ENCODE measurements at regions of chr19 and their contacts with region 1.

Region 1: GRCh38 chr19:18185538-18185937 is 7.5 kb upstream of the MPV17L2 start:
- DNase-seq: no peak
- ATAC-seq: no peak
- H3K4me3 ChIP-seq: no peak overlapping the region
- H3K27ac ChIP-seq: no peak overlapping the region
- H3K4me1 ChIP-seq: no peaks in the 10 kb centered on the region
- H3K27me3 ChIP-seq: peaks cover 9% of the 10 kb centered on the region
- CTCF ChIP-seq: no peak
- POLR2A ChIP-seq: no peak
- RAD21 ChIP-seq: no peak

Region 2: DNA sequence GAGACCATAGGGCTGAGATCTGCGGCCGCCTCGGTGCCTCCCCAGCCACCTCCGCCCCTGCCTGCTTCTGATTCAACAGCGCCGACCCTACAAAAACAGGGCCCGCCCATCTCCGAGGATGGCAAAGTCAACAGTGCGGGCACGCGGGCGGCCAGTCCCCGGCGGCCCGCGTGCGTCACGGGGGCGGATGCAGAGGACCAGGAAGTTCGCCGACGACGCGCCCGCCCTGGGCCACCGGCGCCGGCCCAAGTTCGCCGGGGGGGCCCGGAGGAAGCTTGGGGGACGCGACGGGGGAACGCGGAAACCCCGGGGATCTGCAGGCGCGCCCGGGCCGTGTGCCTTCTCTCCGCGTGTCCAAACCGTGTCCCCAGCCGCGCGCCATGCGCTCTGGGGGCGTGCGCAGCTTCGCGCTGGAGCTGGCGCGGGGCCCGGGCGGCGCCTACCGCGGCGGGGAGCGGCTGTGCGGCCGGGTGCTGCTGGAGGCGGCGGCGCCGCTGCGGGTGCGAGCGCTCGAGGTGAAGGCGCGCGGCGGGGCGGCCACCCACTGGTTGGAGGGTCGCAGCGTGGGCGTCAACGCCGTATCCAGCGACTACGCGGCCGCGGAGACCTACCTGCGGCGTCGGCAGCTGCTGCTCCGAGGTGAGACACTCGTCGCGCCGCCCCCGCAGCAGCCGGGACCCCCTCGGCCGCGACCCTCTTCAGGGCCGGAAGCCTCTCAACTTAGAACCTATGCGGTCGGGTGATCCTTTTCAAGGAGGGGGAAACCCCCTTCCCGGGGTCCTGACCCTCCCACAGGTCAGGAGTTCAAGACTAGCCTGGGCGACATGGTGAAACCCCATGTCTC is 184.4 kb before region 1 on chr19:
- CTCF ChIA-PET with region 1: no interaction called
- POLR2A ChIA-PET with region 1: no interaction called
- dilution Hi-C with region 1: no loop called
- in situ Hi-C with region 1: no loop called
- intact Hi-C with region 1: no loop called
- DNase-seq: peak; percentile 73
- ATAC-seq: peak; percentile 84
- H3K4me3 ChIP-seq: peak overlapping the region; percentile 63
- H3K27ac ChIP-seq: peak overlapping the region; percentile 24; the same call in 1 of the 2 replicates
- H3K4me1 ChIP-seq: no peaks in the 10 kb centered on the region
- H3K27me3 ChIP-seq: no peaks in the 10 kb centered on the region
- CTCF ChIP-seq: no peak
- POLR2A ChIP-seq: peak; percentile 64
- RAD21 ChIP-seq: no peak

Region 3: GRCh38 chr19:18401580-18402112 is 216.1 kb after region 1 on chr19:
- CTCF ChIA-PET with region 1: no interaction called
- POLR2A ChIA-PET with region 1: interaction called, 14 read pairs
- dilution Hi-C with region 1: no loop called
- in situ Hi-C with region 1: no loop called
- intact Hi-C with region 1: no loop called
- DNase-seq: peak; percentile 69
- ATAC-seq: peak; percentile 59
- H3K4me3 ChIP-seq: no peak overlapping the region
- H3K27ac ChIP-seq: no peak overlapping the region
- H3K4me1 ChIP-seq: peaks cover 21% of the 10 kb centered on the region
- H3K27me3 ChIP-seq: no peaks in the 10 kb centered on the region
- CTCF ChIP-seq: peak; percentile 45
- POLR2A ChIP-seq: no peak
- RAD21 ChIP-seq: no peak; the same call in 1 of the 2 replicates